ENCODE measurements at regions of chr1 and their contacts with region 1.

Region 1: DNA sequence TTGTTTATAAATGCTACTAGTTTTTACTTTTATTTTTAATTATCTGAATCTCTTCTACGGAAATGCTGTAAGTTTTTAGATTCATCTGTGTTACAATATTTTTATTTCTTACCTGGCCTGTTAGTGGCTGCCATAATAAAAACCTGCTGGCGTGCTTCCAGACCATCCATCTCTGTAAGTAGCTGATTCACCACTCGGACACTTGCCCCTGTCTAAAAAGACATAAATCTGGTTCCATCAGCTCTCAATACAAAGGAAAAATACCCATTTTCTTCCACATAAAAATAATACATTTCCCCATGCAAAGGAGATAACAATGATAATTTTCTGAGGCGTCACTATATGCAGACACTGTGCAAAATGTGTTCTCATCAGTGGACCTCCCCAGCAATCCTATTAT is 62.0 kb downstream of the NVL start:
- DNase-seq: no peak
- H3K27ac ChIP-seq: no peak overlapping the region
- CTCF ChIP-seq: no peak

Region 2: GRCh38 chr1:223771814-223772770 is 495.8 kb before region 1 on chr1:
- CTCF ChIA-PET with region 1: no interaction called
- POLR2A ChIA-PET with region 1: interaction called, 11 read pairs
- DNase-seq: peak; percentile 76
- H3K27ac ChIP-seq: peak overlapping the region; percentile 74
- CTCF ChIP-seq: no peak